ENCODE measurements at regions of chr3 and their contacts with region 1.

Region 1: DNA sequence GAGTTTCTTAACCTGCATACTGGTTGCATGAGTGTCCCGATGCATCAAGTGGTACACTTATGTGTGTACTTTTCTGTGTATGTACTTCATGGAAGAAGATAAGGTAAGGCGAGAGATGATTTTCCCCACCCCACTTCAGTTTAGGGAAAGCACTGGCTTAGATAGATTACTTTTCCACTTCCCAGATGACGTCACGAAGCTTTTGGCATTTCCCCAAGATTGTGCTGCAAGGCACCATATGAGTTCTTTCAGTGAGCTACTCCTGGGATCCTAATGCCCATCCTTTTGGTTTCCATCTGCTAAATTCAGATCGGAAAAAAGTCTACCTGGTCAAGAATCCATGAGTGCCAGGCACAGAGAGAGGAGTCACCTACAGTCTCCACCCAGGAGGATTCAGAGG is 4.5 kb downstream of the IL17RB start:
- DNase-seq: no peak
- ATAC-seq: no peak

Region 2: GRCh38 chr3:53729618-53730017 is 121.3 kb before region 1 on chr3:
- intact Hi-C with region 1: loop called in 1 of 2 experiments (anchors 10 kb)
- DNase-seq: no peak
- ATAC-seq: peak; percentile 27 to 40